Mammary epithelial cell (primary cell): ENCODE measurements at regions of chr11 and their contacts with region 1.

Region 1: DNA sequence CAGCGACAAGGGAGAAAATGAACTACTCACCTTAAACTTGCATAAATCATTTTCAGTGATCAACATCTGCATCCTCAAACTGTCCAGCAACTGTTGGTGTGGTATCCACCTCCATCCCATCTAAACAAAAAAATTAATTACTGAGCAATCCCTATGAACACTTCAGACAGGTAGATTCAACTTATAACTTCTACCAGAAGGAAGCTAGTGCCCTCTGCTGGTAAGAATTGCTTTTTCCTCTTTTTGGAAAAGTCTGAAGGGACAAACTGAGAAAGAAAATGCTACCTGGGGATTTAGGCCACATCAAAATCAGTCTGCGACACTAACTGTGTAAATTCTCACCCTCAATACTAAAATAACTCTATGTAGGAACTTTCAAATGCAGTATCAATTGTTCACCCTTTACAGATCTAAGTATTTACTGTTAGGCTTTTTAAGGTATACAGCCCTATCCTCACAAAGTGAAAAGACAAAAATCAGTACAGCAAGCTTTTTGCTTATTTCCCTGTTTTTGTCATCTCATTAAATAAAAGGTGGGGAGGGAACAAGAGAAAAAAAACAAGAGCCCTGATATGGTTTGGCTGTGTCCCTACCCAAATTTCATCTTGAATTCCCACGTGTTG is 17.9 kb downstream of the CLNS1A start:
- DNase-seq: peak; percentile 50
- H3K4me3 ChIP-seq: no peak overlapping the region
- H3K27ac ChIP-seq: no peak overlapping the region
- H3K4me1 ChIP-seq: no peaks in the 10 kb centered on the region
- H3K27me3 ChIP-seq: no peaks in the 10 kb centered on the region
- CTCF ChIP-seq: peak; percentile 72 to 76

Region 2: GRCh38 chr11:76835928-76836612 is 783.6 kb before region 1 on chr11:
- CTCF ChIA-PET with region 1: no interaction called
- dilution Hi-C with region 1: no loop called
- in situ Hi-C with region 1: no loop called
- intact Hi-C with region 1: no loop called
- DNase-seq: no peak
- H3K4me3 ChIP-seq: no peak overlapping the region
- H3K27ac ChIP-seq: no peak overlapping the region
- H3K4me1 ChIP-seq: peaks cover 25% of the 10 kb centered on the region
- H3K27me3 ChIP-seq: no peaks in the 10 kb centered on the region
- CTCF ChIP-seq: no peak

Region 3: DNA sequence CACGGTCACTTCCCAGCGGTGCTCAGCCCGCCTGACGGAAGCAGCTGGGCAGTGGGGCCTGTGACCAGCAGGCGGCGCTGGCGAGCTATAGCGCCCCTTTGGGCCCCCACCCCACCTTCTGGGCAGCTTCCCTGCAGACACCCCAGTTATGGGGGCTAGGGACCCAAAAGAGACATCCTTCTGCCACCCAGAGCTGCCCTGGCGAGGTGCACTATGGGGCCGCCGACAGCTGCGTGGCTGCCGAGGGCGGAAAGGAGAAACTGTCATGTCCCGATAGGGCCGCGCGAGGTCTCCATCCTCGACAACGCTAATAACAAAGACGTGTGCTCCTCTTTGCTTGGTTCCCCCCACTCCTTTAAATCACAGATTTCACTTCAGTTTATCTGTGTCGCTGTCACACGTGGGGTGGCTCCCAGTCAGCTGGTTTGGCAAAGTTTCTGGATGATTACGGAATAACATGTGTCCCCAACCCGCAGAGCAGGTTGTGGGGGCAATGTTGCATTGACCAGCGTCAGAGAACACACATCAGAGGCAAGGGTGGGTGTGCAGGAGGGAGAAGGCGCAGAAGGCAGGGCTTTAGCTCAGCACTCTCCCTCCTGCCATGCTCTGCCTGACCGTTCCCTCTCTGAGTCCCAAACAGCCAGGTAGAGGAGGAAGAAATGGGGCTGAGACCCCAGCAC is 492.3 kb before region 1 on chr11:
- CTCF ChIA-PET with region 1: no interaction called
- dilution Hi-C with region 1: no loop called
- in situ Hi-C with region 1: no loop called
- intact Hi-C with region 1: loop called (anchors 1 kb)
- DNase-seq: peak; percentile 16
- H3K4me3 ChIP-seq: peak overlapping the region; percentile 27 to 55 (median 40)
- H3K27ac ChIP-seq: no peak overlapping the region
- H3K4me1 ChIP-seq: peaks cover 8% of the 10 kb centered on the region
- H3K27me3 ChIP-seq: no peaks in the 10 kb centered on the region
- CTCF ChIP-seq: peak; percentile 88 to 99

Region 4: GRCh38 chr11:77370226-77370625 is 249.5 kb before region 1 on chr11:
- CTCF ChIA-PET with region 1: no interaction called
- dilution Hi-C with region 1: no loop called
- in situ Hi-C with region 1: no loop called
- intact Hi-C with region 1: loop called (anchors 10 kb)
- DNase-seq: no peak
- H3K4me3 ChIP-seq: no peak overlapping the region
- H3K27ac ChIP-seq: no peak overlapping the region
- H3K4me1 ChIP-seq: peaks cover 16% of the 10 kb centered on the region
- H3K27me3 ChIP-seq: no peaks in the 10 kb centered on the region
- CTCF ChIP-seq: no peak

Region 5: DNA sequence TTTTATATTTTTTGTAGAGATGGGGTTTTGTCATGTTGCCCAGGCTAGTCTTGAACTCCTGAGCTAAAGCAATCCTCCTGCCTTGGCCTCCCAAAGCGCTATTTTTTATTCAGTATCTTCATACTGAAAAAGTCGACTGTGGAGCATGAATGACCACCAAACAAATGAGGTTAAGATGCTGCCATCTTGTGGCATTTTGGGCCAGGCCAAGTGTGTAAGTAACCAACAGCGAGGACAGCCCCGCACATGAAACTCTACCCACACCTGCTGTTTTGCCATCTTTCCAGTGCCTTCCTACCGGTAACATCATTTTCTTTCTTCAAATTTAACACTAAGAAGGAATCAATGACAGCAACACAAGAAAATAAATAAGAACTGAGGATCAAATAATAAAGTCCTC is 62.1 kb before region 1 on chr11:
- CTCF ChIA-PET with region 1: no interaction called
- dilution Hi-C with region 1: no loop called
- in situ Hi-C with region 1: no loop called
- intact Hi-C with region 1: loop called (anchors 5 kb)
- DNase-seq: no peak
- H3K4me3 ChIP-seq: no peak overlapping the region
- H3K27ac ChIP-seq: no peak overlapping the region
- H3K4me1 ChIP-seq: peaks cover 20% of the 10 kb centered on the region
- H3K27me3 ChIP-seq: no peaks in the 10 kb centered on the region
- CTCF ChIP-seq: peak; percentile 16 to 18

Region 6: DNA sequence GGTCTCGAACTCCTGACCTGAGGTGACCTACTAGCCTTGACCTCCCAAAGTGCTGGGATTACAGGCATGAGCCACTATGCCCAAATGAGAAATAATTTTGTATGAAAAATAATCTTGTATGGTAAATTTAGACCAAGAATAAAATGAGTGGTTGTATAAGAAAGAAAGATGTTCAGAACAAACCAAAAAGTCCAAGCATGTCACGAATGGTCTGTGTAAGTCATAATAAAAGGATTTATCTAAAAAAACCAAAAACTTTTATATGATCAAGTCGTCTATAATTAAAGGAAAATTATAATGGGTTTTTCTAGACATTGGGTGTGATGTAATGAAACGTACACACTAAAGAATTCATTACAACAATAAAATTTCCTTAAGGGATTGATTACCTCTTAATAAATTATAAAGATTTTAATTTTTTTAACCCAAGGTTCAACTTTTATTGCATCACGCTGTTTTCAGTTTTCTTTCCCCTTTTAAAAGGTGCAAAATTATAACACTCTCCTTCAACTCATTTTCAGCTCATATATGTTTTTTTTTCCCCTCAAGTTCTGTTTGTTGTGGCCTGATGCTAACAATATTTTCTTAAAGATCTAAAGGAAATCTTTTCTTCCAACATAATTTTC is 38.9 kb before region 1 on chr11:
- CTCF ChIA-PET with region 1: no interaction called
- dilution Hi-C with region 1: no loop called
- in situ Hi-C with region 1: no loop called
- intact Hi-C with region 1: no loop called
- DNase-seq: peak; percentile 17
- H3K4me3 ChIP-seq: no peak overlapping the region
- H3K27ac ChIP-seq: no peak overlapping the region
- H3K4me1 ChIP-seq: no peaks in the 10 kb centered on the region
- H3K27me3 ChIP-seq: no peaks in the 10 kb centered on the region
- CTCF ChIP-seq: no peak

Region 7: DNA sequence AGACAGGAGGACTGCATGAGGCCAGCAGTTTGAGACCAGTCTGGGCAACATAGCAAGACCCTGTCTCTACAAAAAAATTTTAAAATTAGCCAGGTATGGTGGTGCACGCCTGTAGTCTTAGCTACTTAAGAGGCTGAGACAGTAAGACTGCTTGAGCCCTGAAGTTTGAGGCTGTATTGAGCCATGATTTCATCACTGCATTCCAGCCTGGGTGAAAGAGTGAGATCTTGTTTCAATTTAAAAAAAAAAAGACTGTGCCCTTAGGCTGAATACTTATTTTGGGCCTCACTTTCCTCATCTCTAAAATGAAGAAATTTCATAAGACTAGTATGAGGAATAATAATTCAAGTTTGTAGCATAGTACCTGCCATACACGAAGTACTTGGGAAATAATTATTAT is 23.1 kb before region 1 on chr11:
- CTCF ChIA-PET with region 1: no interaction called
- dilution Hi-C with region 1: no loop called
- in situ Hi-C with region 1: no loop called
- intact Hi-C with region 1: no loop called
- DNase-seq: peak; percentile 15
- H3K4me3 ChIP-seq: no peak overlapping the region
- H3K27ac ChIP-seq: no peak overlapping the region
- H3K4me1 ChIP-seq: peaks cover 1% of the 10 kb centered on the region
- H3K27me3 ChIP-seq: no peaks in the 10 kb centered on the region
- CTCF ChIP-seq: no peak